ENCODE measurements at regions of chr13 and their contacts with region 1.

Region 1: GRCh38 chr13:20711301-20712044 is 8.0 kb downstream of the IL17D start:
- H3K4me3 ChIP-seq: no peak overlapping the region
- H3K27ac ChIP-seq: no peak overlapping the region
- H3K4me1 ChIP-seq: no peaks in the 10 kb centered on the region
- CTCF ChIP-seq: no peak

Region 2: GRCh38 chr13:20721454-20722357 is 10.2 kb after region 1 on chr13:
- CTCF ChIA-PET with region 1: interaction called, 12 read pairs
- POLR2A ChIA-PET with region 1: no interaction called
- H3K4me3 ChIP-seq: no peak overlapping the region
- H3K27ac ChIP-seq: no peak overlapping the region
- H3K4me1 ChIP-seq: peaks cover 6% of the 10 kb centered on the region
- CTCF ChIP-seq: no peak

Region 3: GRCh38 chr13:20860844-20861243 is 149.4 kb after region 1 on chr13:
- CTCF ChIA-PET with region 1: no interaction called
- POLR2A ChIA-PET with region 1: no interaction called
- H3K4me3 ChIP-seq: no peak overlapping the region
- H3K27ac ChIP-seq: no peak overlapping the region
- H3K4me1 ChIP-seq: no peaks in the 10 kb centered on the region
- CTCF ChIP-seq: no peak